B cell (primary cell): ENCODE measurements at regions of chr12 and their contacts with region 1.

Region 1: GRCh38 chr12:91382081-91382543 is 199.5 kb upstream of the DCN start:
- DNase-seq: peak; percentile 89
- ATAC-seq: peak; percentile 82
- H3K4me3 ChIP-seq: peak overlapping the region; percentile 11 to 81 (median 47)
- H3K4me3 Mint-ChIP-seq: peak overlapping the region; percentile 83
- H3K27ac ChIP-seq: peak overlapping the region in 1 of 2 donors; percentile 20
- H3K27ac Mint-ChIP-seq: peak overlapping the region; percentile 28
- H3K4me1 ChIP-seq: peaks cover 5 to 9% of the 10 kb centered on the region in 2 donors
- H3K4me1 Mint-ChIP-seq: peaks cover 10% of the 10 kb centered on the region
- H3K27me3 ChIP-seq: no peaks in the 10 kb centered on the region
- H3K27me3 Mint-ChIP-seq: peaks cover 8% of the 10 kb centered on the region
- CTCF ChIP-seq: peak; percentile 91

Region 2: GRCh38 chr12:90836689-90837088 is 545.4 kb before region 1 on chr12:
- CTCF ChIA-PET with region 1: no interaction called
- POLR2A ChIA-PET with region 1: no interaction called
- intact Hi-C with region 1: no loop called
- DNase-seq: no peak
- ATAC-seq: no peak
- H3K4me3 ChIP-seq: no peak overlapping the region
- H3K4me3 Mint-ChIP-seq: no peak overlapping the region
- H3K27ac ChIP-seq: no peak overlapping the region
- H3K27ac Mint-ChIP-seq: no peak overlapping the region
- H3K4me1 ChIP-seq: no peaks in the 10 kb centered on the region
- H3K4me1 Mint-ChIP-seq: peaks cover 9% of the 10 kb centered on the region
- H3K27me3 ChIP-seq: no peaks in the 10 kb centered on the region
- H3K27me3 Mint-ChIP-seq: no peaks in the 10 kb centered on the region
- CTCF ChIP-seq: no peak

Region 3: GRCh38 chr12:91355150-91356006 is 26.7 kb before region 1 on chr12:
- CTCF ChIA-PET with region 1: interaction called, 11 read pairs
- POLR2A ChIA-PET with region 1: no interaction called
- intact Hi-C with region 1: no loop called
- DNase-seq: peak; percentile 50
- ATAC-seq: peak; percentile 64
- H3K4me3 ChIP-seq: no peak overlapping the region
- H3K4me3 Mint-ChIP-seq: no peak overlapping the region
- H3K27ac ChIP-seq: no peak overlapping the region
- H3K27ac Mint-ChIP-seq: no peak overlapping the region
- H3K4me1 ChIP-seq: no peaks in the 10 kb centered on the region
- H3K4me1 Mint-ChIP-seq: no peaks in the 10 kb centered on the region
- H3K27me3 ChIP-seq: peaks cover 0 to 5% (median 0%) of the 10 kb centered on the region in 4 experiments
- H3K27me3 Mint-ChIP-seq: peaks cover 20% of the 10 kb centered on the region
- CTCF ChIP-seq: peak; percentile 73

Region 4: GRCh38 chr12:91400271-91400670 is 18.2 kb after region 1 on chr12:
- CTCF ChIA-PET with region 1: interaction called, 13 read pairs
- POLR2A ChIA-PET with region 1: no interaction called
- intact Hi-C with region 1: no loop called
- DNase-seq: no peak
- ATAC-seq: no peak
- H3K4me3 ChIP-seq: no peak overlapping the region
- H3K4me3 Mint-ChIP-seq: no peak overlapping the region
- H3K27ac ChIP-seq: no peak overlapping the region
- H3K27ac Mint-ChIP-seq: no peak overlapping the region
- H3K4me1 ChIP-seq: no peaks in the 10 kb centered on the region
- H3K4me1 Mint-ChIP-seq: no peaks in the 10 kb centered on the region
- H3K27me3 ChIP-seq: no peaks in the 10 kb centered on the region
- H3K27me3 Mint-ChIP-seq: peaks cover 24% of the 10 kb centered on the region
- CTCF ChIP-seq: no peak

Region 5: DNA sequence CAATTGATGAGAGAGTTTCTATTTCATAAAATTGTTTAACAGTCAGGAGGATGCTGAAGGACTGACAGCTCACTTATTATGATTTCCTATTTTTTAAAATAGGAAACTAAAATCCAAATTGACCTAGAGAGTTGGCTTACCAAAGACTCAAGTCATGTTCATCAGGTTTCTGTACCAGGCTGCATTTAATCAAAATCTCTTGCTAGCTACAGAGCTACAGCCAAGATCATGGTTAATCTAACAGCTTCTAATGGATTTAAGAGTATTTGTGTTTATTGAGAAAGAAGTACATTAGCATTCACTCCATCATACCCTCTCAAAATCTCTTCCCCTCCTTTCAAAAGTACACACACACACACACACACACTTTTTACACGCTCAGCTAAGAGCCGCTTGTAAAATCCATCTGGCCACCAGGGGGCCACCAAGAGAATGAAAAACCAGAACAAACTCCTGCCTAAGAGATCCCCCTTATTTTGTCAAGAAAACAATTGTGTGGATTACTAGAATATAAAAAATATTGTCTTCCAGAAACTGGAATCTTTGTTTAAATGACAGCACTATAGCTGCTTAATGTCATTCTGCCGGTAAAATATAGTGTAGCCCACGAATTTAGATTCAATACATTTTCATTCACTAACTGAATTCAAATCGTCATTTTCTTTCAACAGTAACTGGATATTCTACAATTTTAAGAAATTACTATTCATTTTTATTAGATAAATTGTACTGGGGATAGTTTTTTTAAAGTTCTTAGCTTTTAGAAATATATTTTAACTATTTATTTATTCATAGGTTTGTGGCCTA is 429.6 kb after region 1 on chr12:
- CTCF ChIA-PET with region 1: interaction called, 21 read pairs
- POLR2A ChIA-PET with region 1: no interaction called
- intact Hi-C with region 1: loop called (anchors 5 kb)
- DNase-seq: peak; percentile 80
- ATAC-seq: peak; percentile 71
- H3K4me3 ChIP-seq: no peak overlapping the region
- H3K4me3 Mint-ChIP-seq: no peak overlapping the region
- H3K27ac ChIP-seq: no peak overlapping the region
- H3K27ac Mint-ChIP-seq: peak overlapping the region; percentile 43
- H3K4me1 ChIP-seq: peaks cover 0 to 5% of the 10 kb centered on the region in 2 donors
- H3K4me1 Mint-ChIP-seq: peaks cover 4% of the 10 kb centered on the region
- H3K27me3 ChIP-seq: no peaks in the 10 kb centered on the region
- H3K27me3 Mint-ChIP-seq: no peaks in the 10 kb centered on the region
- CTCF ChIP-seq: peak; percentile 90

Region 6: GRCh38 chr12:92445253-92446082 is 1063.4 kb after region 1 on chr12:
- CTCF ChIA-PET with region 1: interaction called, 10 read pairs
- POLR2A ChIA-PET with region 1: no interaction called
- intact Hi-C with region 1: no loop called
- DNase-seq: peak; percentile 89
- ATAC-seq: peak; percentile 71
- H3K4me3 ChIP-seq: peak overlapping the region in 4 of 5 experiments; percentile 0 to 43 (median 25)
- H3K4me3 Mint-ChIP-seq: peak overlapping the region; percentile 80
- H3K27ac ChIP-seq: peak overlapping the region; percentile 99
- H3K27ac Mint-ChIP-seq: peak overlapping the region; percentile 96
- H3K4me1 ChIP-seq: peaks cover 90 to 93% of the 10 kb centered on the region in 2 donors
- H3K4me1 Mint-ChIP-seq: peaks cover 91% of the 10 kb centered on the region
- H3K27me3 ChIP-seq: no peaks in the 10 kb centered on the region
- H3K27me3 Mint-ChIP-seq: no peaks in the 10 kb centered on the region
- CTCF ChIP-seq: no peak

Region 7: GRCh38 chr12:92608151-92609091 is 1226.3 kb after region 1 on chr12:
- CTCF ChIA-PET with region 1: interaction called, 20 read pairs
- POLR2A ChIA-PET with region 1: no interaction called
- intact Hi-C with region 1: loop called (anchors 1 kb)
- DNase-seq: peak; percentile 60
- ATAC-seq: no peak
- H3K4me3 ChIP-seq: no peak overlapping the region
- H3K4me3 Mint-ChIP-seq: peak overlapping the region; percentile 33
- H3K27ac ChIP-seq: no peak overlapping the region
- H3K27ac Mint-ChIP-seq: no peak overlapping the region
- H3K4me1 ChIP-seq: no peaks in the 10 kb centered on the region
- H3K4me1 Mint-ChIP-seq: peaks cover 11% of the 10 kb centered on the region
- H3K27me3 ChIP-seq: no peaks in the 10 kb centered on the region
- H3K27me3 Mint-ChIP-seq: no peaks in the 10 kb centered on the region
- CTCF ChIP-seq: no peak

Region 8: GRCh38 chr12:92654929-92655328 is 1272.8 kb after region 1 on chr12:
- CTCF ChIA-PET with region 1: interaction called, 127 read pairs
- POLR2A ChIA-PET with region 1: no interaction called
- intact Hi-C with region 1: loop called (anchors 1 kb)
- DNase-seq: no peak
- ATAC-seq: no peak
- H3K4me3 ChIP-seq: no peak overlapping the region
- H3K4me3 Mint-ChIP-seq: no peak overlapping the region
- H3K27ac ChIP-seq: no peak overlapping the region
- H3K27ac Mint-ChIP-seq: no peak overlapping the region
- H3K4me1 ChIP-seq: no peaks in the 10 kb centered on the region
- H3K4me1 Mint-ChIP-seq: peaks cover 2% of the 10 kb centered on the region
- H3K27me3 ChIP-seq: no peaks in the 10 kb centered on the region
- H3K27me3 Mint-ChIP-seq: peaks cover 8% of the 10 kb centered on the region
- CTCF ChIP-seq: no peak